Panc1 (cell line): ENCODE measurements at regions of chr15 and their contacts with region 1.

Region 1: DNA sequence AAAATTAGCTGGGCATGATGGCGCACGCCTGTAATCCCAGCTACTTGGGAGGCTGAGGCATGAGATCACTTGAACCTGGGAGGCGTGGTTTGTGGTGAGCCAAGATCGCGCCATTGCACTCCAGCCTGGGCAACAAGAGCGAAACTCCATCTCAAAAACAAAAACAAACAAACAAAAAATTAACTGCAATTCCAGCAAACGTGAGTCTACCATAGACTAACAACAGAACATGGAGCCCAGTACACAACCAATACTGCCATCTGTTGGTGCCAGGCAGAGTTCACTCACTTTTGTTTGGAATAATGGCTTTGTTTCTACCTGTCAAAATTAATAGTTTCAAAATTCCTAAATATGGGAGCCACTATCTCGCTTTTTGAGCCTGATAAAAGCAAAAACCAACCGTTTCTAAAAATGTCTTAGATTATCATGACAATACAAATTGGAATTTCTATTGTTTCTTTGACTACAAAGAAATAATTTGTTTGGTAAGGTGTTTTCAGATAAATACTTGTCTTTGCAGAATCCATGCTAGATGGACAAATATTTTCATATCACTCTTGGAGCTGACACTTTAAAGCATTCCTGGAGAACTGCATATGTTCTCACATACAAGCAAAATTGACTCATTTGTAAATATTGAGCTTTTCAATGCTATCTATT is 45.0 kb downstream of the GPR176 start:
- DNase-seq: peak; percentile 36
- ATAC-seq: peak; percentile 69; the same call in 1 of the 2 replicates
- H3K4me3 ChIP-seq: no peak overlapping the region
- H3K27ac ChIP-seq: no peak overlapping the region
- H3K4me1 ChIP-seq: no peaks in the 10 kb centered on the region
- H3K27me3 ChIP-seq: no peaks in the 10 kb centered on the region
- CTCF ChIP-seq: peak; percentile 73

Region 2: GRCh38 chr15:39357480-39358268 is 517.3 kb before region 1 on chr15:
- CTCF ChIA-PET with region 1: no interaction called
- POLR2A ChIA-PET with region 1: no interaction called
- in situ Hi-C with region 1: no loop called
- intact Hi-C with region 1: no loop called
- DNase-seq: no peak
- ATAC-seq: no peak
- H3K4me3 ChIP-seq: no peak overlapping the region
- H3K27ac ChIP-seq: no peak overlapping the region
- H3K4me1 ChIP-seq: no peaks in the 10 kb centered on the region
- H3K27me3 ChIP-seq: no peaks in the 10 kb centered on the region
- CTCF ChIP-seq: no peak

Region 3: DNA sequence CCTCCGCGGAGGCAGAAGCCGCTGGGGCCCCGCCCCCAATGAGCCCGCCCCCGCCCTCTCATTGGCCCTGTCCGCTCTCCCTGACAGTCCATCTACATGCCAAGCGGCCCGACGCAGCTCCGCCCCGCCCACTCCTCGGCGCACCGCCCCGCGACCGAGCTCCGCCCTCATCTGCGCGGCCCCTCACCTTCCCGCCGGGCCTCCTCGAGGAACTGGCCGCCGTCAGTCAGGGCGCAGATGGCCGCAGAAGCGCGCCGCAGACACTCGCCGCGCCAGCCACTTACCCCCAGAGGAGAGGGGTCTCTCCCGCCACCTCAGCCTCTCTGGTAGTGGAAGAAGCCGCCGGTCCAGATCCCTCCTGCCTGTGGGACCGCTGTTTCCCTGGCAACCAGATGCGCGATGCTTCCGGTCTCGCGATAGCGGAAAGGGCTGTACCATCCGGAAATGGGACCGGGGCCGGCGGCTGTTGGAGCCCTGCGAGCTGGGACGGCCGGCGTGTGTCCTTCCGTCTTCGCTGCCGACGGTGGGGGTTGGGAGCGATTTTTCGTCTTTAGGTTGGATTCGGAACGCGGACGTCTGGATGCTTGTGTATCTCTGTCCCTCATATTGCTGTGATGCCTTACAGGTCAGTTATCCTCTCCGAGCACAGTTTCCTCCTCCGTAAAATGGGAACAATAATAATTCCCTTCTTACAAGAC is 92.4 kb before region 1 on chr15 and contains the start of gene FSIP1:
- CTCF ChIA-PET with region 1: no interaction called
- POLR2A ChIA-PET with region 1: no interaction called
- in situ Hi-C with region 1: no loop called
- intact Hi-C with region 1: loop called (anchors 2 kb)
- DNase-seq: peak; percentile 89
- ATAC-seq: peak; percentile 99
- H3K4me3 ChIP-seq: peak within 1 kb of the TSS; percentile 63 to 93
- H3K27ac ChIP-seq: peak within 1 kb of the TSS; percentile 85
- H3K4me1 ChIP-seq: peaks cover 37% of the 10 kb centered on the region
- H3K27me3 ChIP-seq: no peaks in the 10 kb centered on the region
- CTCF ChIP-seq: no peak
- total RNA-seq, gene FSIP1: 1.4 TPM

Region 4: GRCh38 chr15:39801641-39802309 is 73.2 kb before region 1 on chr15:
- CTCF ChIA-PET with region 1: no interaction called
- POLR2A ChIA-PET with region 1: no interaction called
- in situ Hi-C with region 1: no loop called
- intact Hi-C with region 1: loop called (anchors 1 kb)
- DNase-seq: no peak
- ATAC-seq: peak; percentile 93
- H3K4me3 ChIP-seq: no peak overlapping the region
- H3K27ac ChIP-seq: no peak overlapping the region
- H3K4me1 ChIP-seq: no peaks in the 10 kb centered on the region
- H3K27me3 ChIP-seq: no peaks in the 10 kb centered on the region
- CTCF ChIP-seq: peak; percentile 74